Activated CD4-positive, alpha-beta memory T cell treated with anti-CD3 and anti-CD28 coated beads, Interleukin-2, amount 10 ng/mL, durations not matched to agents 7 days and 5 days (primary cell): ENCODE measurements at regions of chr9 and their contacts with region 1.

Region 1: GRCh38 chr9:131709771-131710454 is 30.0 kb downstream of the RAPGEF1 start:
- DNase-seq: peak; percentile 44
- H3K4me3 Mint-ChIP-seq: peak overlapping the region; percentile 39
- H3K27ac Mint-ChIP-seq: peak overlapping the region; percentile 88
- H3K4me1 Mint-ChIP-seq: peaks cover 79% of the 10 kb centered on the region
- H3K27me3 Mint-ChIP-seq: no peaks in the 10 kb centered on the region

Region 2: DNA sequence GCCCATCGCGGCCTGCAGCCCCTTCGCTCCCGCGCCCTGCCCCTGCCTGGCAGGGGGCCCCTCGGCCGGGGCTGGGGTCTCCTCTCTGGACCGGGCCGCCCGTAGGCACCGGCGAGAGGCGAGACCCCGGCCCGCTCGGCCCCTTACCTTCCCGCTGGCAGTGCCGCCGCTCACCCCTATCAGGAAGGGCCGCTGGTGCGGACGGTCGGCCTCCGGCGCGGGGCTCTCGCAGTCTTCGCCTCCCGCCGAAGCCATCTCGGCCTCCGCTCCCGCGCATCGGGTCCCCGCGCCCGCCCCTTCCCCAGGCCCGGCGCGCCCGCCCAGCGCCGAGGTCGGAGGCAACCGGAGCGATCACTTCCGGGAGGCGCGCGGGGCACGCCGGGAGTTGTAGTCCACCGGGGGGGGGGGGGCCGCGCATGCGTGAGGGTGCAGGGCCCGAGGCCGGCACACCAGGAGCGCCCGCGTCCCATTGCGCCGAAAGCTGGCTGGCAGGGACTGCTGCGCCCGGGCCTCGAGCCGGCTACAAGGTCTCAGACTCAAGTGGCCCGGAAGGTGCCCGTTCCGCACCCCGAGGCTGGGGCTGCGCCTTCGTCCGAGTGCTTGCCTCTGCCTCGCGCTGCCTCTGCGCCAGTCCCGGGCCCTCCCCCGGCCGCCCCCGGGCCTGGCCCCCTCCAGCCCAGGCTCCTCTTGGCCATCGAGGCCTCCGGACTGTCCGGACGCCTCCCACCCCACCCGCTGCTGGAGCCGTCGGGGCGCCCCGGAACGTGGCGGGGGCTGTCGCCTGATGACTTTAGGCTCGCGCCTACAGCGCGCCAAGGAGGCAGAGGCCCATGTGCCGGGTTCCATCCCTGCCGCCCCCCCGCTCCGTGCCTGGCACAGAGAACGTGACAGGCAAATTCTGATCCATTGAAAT is 178.7 kb before region 1 on chr9 and contains the start of gene UCK1:
- CTCF ChIA-PET with region 1: no interaction called
- POLR2A ChIA-PET with region 1: no interaction called
- DNase-seq: peak; percentile 78
- H3K4me3 Mint-ChIP-seq: peak within 1 kb of the TSS; percentile 73
- H3K27ac Mint-ChIP-seq: peak within 1 kb of the TSS; percentile 54
- H3K4me1 Mint-ChIP-seq: peaks cover 31% of the 10 kb centered on the region
- H3K27me3 Mint-ChIP-seq: no peaks in the 10 kb centered on the region
- total RNA-seq, gene UCK1: 23.8 to 24.6 TPM

Region 3: DNA sequence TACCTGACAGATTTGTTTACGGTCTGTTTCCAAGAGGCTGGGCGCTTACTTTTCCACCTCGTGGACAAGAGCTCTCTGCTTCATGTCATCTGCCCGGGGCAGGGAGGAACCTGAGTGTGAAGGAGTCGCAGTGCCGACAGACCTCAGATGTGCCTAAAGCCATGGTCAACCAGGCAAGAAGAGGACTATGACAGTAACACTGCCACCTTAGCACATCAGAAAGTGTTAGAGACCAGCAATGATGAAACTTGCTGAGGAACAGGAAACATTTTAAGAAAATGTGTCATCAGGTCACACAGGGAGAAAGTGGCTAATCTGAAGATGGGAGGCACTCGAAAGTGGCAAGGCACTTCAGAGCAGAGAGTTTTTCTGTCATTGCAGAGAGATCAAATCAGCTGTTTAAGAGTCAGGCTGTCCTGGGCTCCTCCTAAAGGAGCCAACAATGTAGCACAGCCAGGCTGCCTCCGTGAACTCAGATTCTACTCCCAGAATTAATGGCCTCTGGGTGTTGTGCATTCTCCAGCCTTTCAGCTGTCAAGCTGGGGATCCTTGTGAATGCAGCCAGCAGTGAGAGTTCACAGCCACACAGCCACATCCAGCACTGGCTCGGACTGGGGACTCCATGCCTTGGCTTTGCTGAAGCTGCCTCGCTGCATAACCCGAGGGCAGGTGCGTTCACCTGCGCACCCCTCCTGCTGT is 64.7 kb before region 1 on chr9:
- CTCF ChIA-PET with region 1: no interaction called
- POLR2A ChIA-PET with region 1: no interaction called
- DNase-seq: peak; percentile 35
- H3K4me3 Mint-ChIP-seq: no peak overlapping the region
- H3K27ac Mint-ChIP-seq: peak overlapping the region; percentile 83
- H3K4me1 Mint-ChIP-seq: peaks cover 61% of the 10 kb centered on the region
- H3K27me3 Mint-ChIP-seq: no peaks in the 10 kb centered on the region

Region 4: DNA sequence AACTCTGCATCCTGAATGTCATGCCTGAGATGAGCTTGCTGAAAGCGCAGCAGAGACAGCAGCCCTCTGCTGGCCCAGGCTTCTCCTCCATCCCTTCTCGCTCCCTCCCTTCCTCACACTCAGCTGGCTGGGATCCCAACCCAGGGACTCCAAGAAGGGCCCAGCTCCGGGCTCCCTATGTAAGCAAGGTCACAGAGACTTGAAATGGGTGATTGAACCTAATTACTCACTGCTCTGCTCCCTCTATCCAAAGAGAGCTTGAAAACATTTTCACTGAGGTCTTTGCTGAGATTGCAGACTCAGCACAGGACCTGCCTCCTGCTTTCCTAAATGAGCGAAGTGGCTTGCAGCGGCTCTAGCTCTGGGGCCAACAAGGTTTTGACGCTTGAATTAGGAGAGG is 12.8 kb before region 1 on chr9:
- CTCF ChIA-PET with region 1: interaction called, 4 read pairs
- POLR2A ChIA-PET with region 1: interaction called, 10 read pairs
- DNase-seq: no peak
- H3K4me3 Mint-ChIP-seq: no peak overlapping the region
- H3K27ac Mint-ChIP-seq: no peak overlapping the region
- H3K4me1 Mint-ChIP-seq: peaks cover 69% of the 10 kb centered on the region
- H3K27me3 Mint-ChIP-seq: no peaks in the 10 kb centered on the region

Region 5: GRCh38 chr9:131722009-131722629 is 12.2 kb after region 1 on chr9:
- CTCF ChIA-PET with region 1: interaction called, 16 read pairs
- POLR2A ChIA-PET with region 1: interaction called, 106 read pairs
- DNase-seq: no peak
- H3K4me3 Mint-ChIP-seq: no peak overlapping the region
- H3K27ac Mint-ChIP-seq: no peak overlapping the region
- H3K4me1 Mint-ChIP-seq: peaks cover 82% of the 10 kb centered on the region
- H3K27me3 Mint-ChIP-seq: no peaks in the 10 kb centered on the region